ENCODE measurements at regions of chr3 and their contacts with region 1.

Region 1: DNA sequence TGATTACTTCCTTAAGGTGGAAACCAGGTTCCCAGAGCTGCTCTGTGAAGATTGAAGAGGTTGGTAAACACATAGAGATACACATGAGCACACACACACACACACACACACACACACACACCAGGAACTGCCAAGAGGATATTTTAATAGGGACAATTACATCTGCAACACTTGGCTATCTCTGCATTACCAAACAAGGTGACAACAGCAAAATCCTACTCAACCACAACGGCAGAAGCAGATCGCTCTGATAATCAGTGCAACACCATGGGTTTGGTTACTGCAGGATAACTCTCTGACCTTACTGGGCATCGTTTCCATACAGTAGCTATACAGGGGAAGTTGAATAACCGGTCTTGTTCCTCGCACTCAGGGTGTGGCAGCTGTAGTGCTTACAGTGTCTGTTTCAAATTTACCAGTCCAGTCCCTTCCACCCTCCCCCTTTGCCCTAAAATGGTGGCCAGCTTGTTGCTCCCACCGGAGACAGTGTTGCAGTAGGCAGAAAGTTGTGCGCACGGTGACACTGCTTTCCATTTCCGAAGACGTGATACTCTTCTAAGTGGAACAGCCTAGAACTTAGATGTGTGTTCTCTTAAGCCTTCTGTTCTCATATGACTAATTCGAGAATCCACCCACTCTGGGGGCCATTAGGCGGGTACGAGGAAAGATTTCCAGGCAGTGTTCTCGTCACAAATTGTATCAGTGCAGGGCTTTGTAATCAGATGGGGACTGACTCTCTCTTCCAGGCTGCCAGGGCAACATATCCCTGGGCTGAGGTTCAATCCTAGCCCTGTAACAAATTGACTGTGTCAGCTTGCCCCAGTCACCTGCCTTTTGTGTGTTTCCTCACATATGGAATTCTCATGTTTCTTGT is 176.2 kb downstream of the P3H2 start:
- DNase-seq: no peak
- H3K4me3 ChIP-seq: no peak overlapping the region
- H3K27ac ChIP-seq: no peak overlapping the region
- H3K4me1 ChIP-seq: no peaks in the 10 kb centered on the region
- H3K27me3 ChIP-seq: no peaks in the 10 kb centered on the region
- CTCF ChIP-seq: no peak
- POLR2A ChIP-seq: no peak

Region 2: DNA sequence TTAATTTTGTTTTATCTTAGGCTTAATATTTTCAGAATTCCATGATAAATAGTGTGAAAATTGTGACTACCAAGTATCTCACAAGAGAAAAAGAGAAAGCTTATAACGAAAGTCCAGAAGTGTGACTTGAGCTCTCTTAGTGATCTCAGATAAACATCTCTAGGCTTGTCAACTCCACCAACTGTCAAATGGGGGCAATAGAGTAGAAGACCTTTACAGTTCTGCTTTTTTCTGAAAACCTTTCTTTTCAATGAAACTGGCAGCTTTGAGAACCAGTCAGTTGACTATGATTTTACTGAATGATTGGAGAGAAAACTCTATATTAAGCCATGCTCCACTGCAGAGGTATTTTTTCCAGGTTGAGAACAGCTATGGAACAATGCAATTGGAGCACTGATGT is 432.5 kb before region 1 on chr3:
- intact Hi-C with region 1: no loop called
- DNase-seq: no peak
- H3K4me3 ChIP-seq: no peak overlapping the region
- H3K27ac ChIP-seq: peak overlapping the region; percentile 9
- H3K4me1 ChIP-seq: peaks cover 17% of the 10 kb centered on the region
- H3K27me3 ChIP-seq: no peaks in the 10 kb centered on the region
- CTCF ChIP-seq: no peak
- POLR2A ChIP-seq: no peak

Region 3: GRCh38 chr3:189921770-189922169 is 22.8 kb before region 1 on chr3:
- intact Hi-C with region 1: loop called (anchors 1 kb)
- DNase-seq: no peak
- H3K4me3 ChIP-seq: no peak overlapping the region
- H3K27ac ChIP-seq: no peak overlapping the region
- H3K4me1 ChIP-seq: no peaks in the 10 kb centered on the region
- H3K27me3 ChIP-seq: no peaks in the 10 kb centered on the region
- CTCF ChIP-seq: no peak
- POLR2A ChIP-seq: no peak

Region 4: GRCh38 chr3:190621927-190622326 is 677.4 kb after region 1 on chr3:
- intact Hi-C with region 1: no loop called
- DNase-seq: no peak
- H3K4me3 ChIP-seq: no peak overlapping the region
- H3K27ac ChIP-seq: no peak overlapping the region
- H3K4me1 ChIP-seq: no peaks in the 10 kb centered on the region
- H3K27me3 ChIP-seq: no peaks in the 10 kb centered on the region
- CTCF ChIP-seq: no peak
- POLR2A ChIP-seq: no peak

Measured in vagina (tissue), 2 donors.